ENCODE measurements at regions of chr6 and their contacts with region 1.

Region 1: GRCh38 chr6:118724211-118724610 is 72.8 kb upstream of the CEP85L start:
- DNase-seq: no peak
- H3K4me3 Mint-ChIP-seq: peak overlapping the region; percentile 46
- H3K27ac Mint-ChIP-seq: peak overlapping the region; percentile 40
- H3K4me1 Mint-ChIP-seq: peaks cover 56% of the 10 kb centered on the region
- H3K27me3 Mint-ChIP-seq: peaks cover 2% of the 10 kb centered on the region

Region 2: DNA sequence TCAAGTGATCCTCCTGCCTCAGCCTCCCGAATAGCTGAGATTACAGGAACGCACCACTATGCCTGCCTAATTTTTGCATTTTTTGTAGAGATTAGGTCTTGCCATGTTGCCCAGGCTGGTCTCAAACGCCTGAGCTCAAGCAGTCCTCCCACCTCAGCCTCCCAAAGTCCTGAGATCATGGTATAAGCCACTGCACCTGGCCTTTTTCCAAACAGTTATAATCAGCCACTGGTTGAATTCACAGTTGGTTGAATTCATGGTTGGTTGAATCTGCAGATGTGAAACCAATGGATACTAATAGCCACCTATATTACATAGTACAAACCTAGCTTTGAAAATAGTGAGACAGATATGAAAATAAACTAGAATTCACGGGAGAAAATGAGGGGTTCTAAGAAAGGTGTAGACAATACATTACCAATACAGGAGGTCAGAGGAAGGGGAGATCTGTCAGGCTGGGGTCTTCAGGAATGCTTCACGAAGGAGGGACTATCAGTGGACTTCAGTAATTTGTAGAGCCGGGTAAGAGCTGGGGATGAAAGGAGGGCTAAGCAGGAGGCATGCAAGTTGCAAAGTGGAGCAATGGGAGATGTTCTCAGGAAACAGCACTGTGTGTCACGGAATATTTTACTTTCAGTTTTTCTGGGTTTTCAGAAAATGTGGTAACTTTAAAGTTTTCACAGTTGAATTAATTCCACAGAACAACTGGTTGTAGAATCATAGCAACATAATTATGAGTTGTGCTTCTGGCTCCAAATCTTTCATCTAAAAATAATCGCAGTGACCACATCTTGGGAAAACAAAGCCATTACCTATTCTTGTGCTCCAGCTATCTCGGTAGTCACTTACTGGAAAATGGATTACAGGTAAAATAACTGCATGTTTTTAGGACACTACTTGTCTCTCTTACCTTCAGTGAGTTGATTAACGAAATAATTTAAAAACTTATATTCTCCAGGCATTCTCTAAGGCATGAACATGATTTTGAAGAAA is 59.9 kb before region 1 on chr6:
- intact Hi-C with region 1: loop called (anchors 1 kb)
- DNase-seq: no peak
- H3K4me3 Mint-ChIP-seq: peak overlapping the region; percentile 86
- H3K27ac Mint-ChIP-seq: peak overlapping the region; percentile 89
- H3K4me1 Mint-ChIP-seq: peaks cover 61% of the 10 kb centered on the region
- H3K27me3 Mint-ChIP-seq: no peaks in the 10 kb centered on the region

Region 3: DNA sequence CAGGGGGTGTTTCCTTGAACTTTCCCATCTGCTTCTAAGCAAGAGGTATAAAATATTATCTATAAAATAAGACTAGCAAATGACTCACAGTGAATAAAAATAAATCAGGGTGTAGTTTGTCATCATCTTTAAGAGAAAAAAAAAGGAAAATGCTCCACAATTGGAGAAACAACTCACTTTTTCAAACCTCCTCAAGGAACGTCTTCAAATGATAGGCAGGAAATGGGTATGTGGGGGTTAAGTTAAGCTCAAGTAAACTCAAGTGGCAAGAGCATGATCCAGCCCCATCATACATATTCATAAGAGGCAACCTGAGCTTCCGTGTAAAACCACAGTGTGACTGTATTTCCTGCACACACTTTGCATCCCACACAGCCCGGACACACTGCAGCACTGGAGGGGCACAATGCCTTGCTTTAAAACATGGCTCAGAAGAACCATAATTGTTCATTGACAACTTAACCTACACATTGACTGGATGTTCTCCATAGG is 14.3 kb before region 1 on chr6:
- intact Hi-C with region 1: loop called (anchors 1 kb)
- DNase-seq: peak; percentile 77
- H3K4me3 Mint-ChIP-seq: peak overlapping the region; percentile 96
- H3K27ac Mint-ChIP-seq: peak overlapping the region; percentile 99
- H3K4me1 Mint-ChIP-seq: peaks cover 94% of the 10 kb centered on the region
- H3K27me3 Mint-ChIP-seq: peaks cover under 1% of the 10 kb centered on the region

Region 4: GRCh38 chr6:118736440-118736839 is 12.2 kb after region 1 on chr6:
- intact Hi-C with region 1: loop called (anchors 1 kb)
- DNase-seq: no peak
- H3K4me3 Mint-ChIP-seq: no peak overlapping the region
- H3K27ac Mint-ChIP-seq: peak overlapping the region; percentile 65
- H3K4me1 Mint-ChIP-seq: peaks cover 35% of the 10 kb centered on the region
- H3K27me3 Mint-ChIP-seq: no peaks in the 10 kb centered on the region

Region 5: DNA sequence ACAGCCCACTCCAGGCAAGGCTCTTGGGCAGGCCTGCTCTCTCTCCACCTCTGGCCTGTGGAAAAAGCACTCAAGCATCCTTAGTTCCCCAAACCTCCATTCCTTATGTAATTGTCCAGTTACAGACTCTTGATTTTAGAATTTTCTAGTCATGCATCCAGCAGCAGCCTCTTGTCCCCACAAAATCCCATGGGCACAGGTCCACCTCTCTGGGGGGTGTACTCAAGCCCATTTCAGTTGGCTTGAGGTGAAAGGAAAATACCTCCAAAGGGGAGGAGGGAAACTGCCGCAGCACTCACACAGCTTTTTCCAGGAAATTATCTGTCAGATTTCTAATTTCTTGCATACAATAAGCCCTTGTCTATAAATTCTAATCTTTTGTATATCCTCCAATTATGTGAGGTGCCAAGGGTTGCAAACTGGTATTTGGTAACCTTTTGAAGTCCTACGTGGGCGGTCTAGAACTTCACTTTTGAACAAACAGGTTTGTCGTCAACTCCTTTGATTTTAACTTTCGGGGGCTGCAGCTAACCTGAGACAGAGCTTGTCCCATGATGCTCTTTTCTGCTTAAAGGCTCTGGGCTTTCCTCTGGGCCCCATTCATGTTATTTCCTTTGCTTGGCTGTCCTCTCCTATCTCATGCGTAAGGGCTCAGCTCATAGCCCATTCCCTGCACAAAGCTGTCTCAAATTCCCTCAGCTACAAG is 31.9 kb after region 1 on chr6:
- intact Hi-C with region 1: loop called (anchors 1 kb)
- DNase-seq: no peak
- H3K4me3 Mint-ChIP-seq: no peak overlapping the region
- H3K27ac Mint-ChIP-seq: peak overlapping the region; percentile 6
- H3K4me1 Mint-ChIP-seq: peaks cover 6% of the 10 kb centered on the region
- H3K27me3 Mint-ChIP-seq: peaks cover 3% of the 10 kb centered on the region

Region 6: GRCh38 chr6:118768904-118769325 is 44.7 kb after region 1 on chr6:
- intact Hi-C with region 1: loop called (anchors 1 kb)
- DNase-seq: peak; percentile 31
- H3K4me3 Mint-ChIP-seq: peak overlapping the region; percentile 1
- H3K27ac Mint-ChIP-seq: peak overlapping the region; percentile 80
- H3K4me1 Mint-ChIP-seq: peaks cover 29% of the 10 kb centered on the region
- H3K27me3 Mint-ChIP-seq: no peaks in the 10 kb centered on the region

Region 7: GRCh38 chr6:118776607-118777549 is 52.7 kb after region 1 on chr6:
- intact Hi-C with region 1: loop called (anchors 1 kb)
- DNase-seq: peak; percentile 55
- H3K4me3 Mint-ChIP-seq: no peak overlapping the region
- H3K27ac Mint-ChIP-seq: no peak overlapping the region
- H3K4me1 Mint-ChIP-seq: peaks cover 14% of the 10 kb centered on the region
- H3K27me3 Mint-ChIP-seq: peaks cover 8% of the 10 kb centered on the region